PC-9 (cell line): ENCODE measurements at regions of chr2 and their contacts with region 1.

Region 1: DNA sequence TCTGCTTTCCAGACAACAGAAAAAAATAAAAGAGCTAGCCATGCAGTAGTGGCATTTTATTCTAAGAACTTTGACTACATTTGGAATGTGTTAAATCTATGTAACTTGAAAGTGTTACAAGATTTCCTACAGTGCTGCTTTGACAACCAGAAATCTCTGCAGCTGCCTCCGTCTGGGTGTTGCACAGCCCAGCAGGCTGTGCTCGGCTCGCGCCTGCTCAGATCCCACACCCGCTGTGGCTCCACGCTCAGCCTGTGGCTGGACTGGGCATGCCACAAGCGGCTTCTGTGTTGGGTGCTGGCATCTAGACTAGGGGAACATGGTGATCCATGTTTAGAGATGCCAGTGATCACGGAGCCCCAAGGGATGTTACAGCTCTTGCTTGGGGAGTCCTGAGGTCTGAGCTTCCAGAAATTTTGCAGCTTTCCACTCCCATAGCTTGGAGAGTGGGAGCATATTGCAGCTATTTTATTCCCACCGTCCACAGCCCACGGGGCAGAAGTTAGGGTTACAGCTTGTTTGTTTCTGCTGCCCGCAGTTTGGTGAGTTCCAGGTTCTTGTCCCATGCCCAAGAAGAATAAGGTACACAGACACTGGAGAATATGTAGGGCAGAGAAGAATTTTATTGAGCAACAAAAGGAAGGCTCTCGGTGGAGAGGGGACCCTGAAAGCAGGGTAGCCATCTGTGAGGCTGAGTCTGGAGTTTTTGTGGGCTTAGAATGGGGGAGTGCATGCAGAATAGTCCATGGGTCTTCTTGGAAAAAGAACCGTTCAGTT is 44.1 kb downstream of the FAM171B start:
- DNase-seq: no peak
- H3K4me3 ChIP-seq: no peak overlapping the region
- H3K27ac ChIP-seq: no peak overlapping the region
- H3K4me1 ChIP-seq: no peaks in the 10 kb centered on the region
- H3K27me3 ChIP-seq: no peaks in the 10 kb centered on the region
- CTCF ChIP-seq: no peak

Region 2: GRCh38 chr2:186717320-186718007 is 20.5 kb before region 1 on chr2:
- CTCF ChIA-PET with region 1: no interaction called
- POLR2A ChIA-PET with region 1: no interaction called
- intact Hi-C with region 1: no loop called
- DNase-seq: no peak
- H3K4me3 ChIP-seq: no peak overlapping the region
- H3K27ac ChIP-seq: no peak overlapping the region
- H3K4me1 ChIP-seq: no peaks in the 10 kb centered on the region
- H3K27me3 ChIP-seq: no peaks in the 10 kb centered on the region
- CTCF ChIP-seq: no peak

Region 3: DNA sequence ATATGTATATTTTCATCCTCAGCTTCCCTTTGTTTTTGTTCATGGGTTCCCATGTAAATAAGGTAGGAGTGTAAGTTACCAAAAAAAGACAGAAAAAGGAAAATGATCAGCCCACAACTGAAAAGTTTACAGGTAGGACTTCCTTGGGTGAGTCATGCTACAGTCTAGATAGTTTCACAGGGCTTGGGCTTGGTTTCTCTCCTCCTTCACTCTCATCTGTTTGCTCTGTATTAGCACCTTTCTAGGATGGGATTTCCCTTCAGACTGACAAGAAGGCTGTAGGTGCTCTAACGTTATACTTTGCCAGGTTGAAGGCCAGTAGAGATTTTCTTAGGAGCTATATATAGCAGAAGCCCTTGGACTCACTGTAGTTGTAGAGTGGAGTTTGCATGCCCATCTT is 13.9 kb after region 1 on chr2:
- CTCF ChIA-PET with region 1: no interaction called
- POLR2A ChIA-PET with region 1: no interaction called
- intact Hi-C with region 1: loop called (anchors 1 kb)
- DNase-seq: peak in 1 of 2 experiments; percentile 46
- H3K4me3 ChIP-seq: no peak overlapping the region
- H3K27ac ChIP-seq: peak overlapping the region; percentile 60
- H3K4me1 ChIP-seq: peaks cover 12% of the 10 kb centered on the region
- H3K27me3 ChIP-seq: no peaks in the 10 kb centered on the region
- CTCF ChIP-seq: no peak

Region 4: GRCh38 chr2:186883666-186884065 is 145.7 kb after region 1 on chr2:
- CTCF ChIA-PET with region 1: no interaction called
- POLR2A ChIA-PET with region 1: interaction called, 13 read pairs
- intact Hi-C with region 1: no loop called
- DNase-seq: no peak
- H3K4me3 ChIP-seq: no peak overlapping the region
- H3K27ac ChIP-seq: no peak overlapping the region
- H3K4me1 ChIP-seq: no peaks in the 10 kb centered on the region
- H3K27me3 ChIP-seq: no peaks in the 10 kb centered on the region
- CTCF ChIP-seq: no peak